Posterior cingulate gyrus (tissue), 11 donors: ENCODE measurements at regions of chr11 and their contacts with region 1.

Region 1: DNA sequence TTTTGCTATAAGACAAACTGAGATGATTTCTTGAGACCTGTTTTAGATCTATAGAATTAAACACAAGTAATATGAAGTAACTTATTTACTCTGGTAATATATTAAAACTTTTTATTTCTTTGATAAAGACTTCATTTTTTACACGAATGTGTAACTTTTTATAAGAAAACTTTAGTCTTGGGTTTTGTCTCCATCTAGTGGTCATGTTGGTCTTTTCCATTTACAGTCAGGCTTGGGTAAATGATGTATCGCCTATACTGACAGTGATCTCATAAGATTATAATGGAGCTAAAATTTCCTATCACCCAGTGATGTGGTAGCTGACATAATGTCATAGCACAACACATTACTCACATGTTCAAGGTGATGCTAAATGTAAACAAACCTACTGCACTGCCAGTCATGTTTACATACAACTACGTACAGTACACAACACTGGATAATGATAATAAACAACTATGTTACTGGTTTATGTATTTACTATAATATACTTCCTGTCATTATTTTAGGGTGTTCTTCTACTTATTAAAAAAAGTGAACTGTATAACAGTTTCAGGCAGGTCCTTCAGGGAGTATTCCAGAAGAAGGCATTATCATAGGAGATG is 7.5 kb upstream of the C11orf97 start:
- DNase-seq: no peak

Region 2: DNA sequence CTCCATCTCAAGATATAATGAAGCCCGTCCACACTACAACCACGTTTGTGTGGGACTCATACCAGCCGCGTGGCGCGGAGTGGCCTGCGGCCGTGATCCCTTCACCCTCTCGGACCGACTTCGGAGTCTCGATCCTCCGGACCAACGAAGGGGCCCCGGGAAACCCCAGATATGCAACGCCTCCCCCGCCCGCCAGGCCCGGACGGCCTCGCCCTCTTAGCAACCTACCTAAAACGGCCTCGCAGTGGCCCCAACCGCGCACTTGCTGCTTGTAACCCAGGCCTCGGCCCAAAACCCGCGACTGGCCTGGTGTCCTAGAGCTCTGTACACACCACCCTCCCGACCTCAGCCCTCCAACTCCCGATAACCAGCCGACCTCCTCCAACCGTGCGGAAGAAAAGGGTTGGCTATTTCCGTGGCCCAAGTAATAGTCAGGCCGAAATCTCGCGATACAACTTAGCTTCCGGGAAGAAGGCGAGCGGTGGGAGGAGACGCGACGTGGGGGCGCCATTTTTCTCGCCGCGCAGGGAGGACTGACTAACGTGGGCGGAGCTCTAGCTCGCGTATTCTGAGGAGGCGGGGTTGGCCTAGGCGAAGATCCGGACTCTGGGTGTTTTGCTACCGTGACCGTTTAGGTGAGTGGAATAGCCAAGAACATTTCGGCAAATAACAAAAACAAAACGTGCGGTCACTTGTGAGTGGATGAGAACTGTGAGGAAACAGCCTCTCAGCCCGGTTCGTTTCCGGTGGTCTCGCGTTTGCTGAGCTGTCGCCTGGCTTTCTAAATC is 763.5 kb before region 1 on chr11 and contains the starts of genes C11orf54 and TAF1D:
- intact Hi-C with region 1: loop called (anchors 10 kb)
- DNase-seq: peak; percentile 94 to 99 (median 95)

Region 3: DNA sequence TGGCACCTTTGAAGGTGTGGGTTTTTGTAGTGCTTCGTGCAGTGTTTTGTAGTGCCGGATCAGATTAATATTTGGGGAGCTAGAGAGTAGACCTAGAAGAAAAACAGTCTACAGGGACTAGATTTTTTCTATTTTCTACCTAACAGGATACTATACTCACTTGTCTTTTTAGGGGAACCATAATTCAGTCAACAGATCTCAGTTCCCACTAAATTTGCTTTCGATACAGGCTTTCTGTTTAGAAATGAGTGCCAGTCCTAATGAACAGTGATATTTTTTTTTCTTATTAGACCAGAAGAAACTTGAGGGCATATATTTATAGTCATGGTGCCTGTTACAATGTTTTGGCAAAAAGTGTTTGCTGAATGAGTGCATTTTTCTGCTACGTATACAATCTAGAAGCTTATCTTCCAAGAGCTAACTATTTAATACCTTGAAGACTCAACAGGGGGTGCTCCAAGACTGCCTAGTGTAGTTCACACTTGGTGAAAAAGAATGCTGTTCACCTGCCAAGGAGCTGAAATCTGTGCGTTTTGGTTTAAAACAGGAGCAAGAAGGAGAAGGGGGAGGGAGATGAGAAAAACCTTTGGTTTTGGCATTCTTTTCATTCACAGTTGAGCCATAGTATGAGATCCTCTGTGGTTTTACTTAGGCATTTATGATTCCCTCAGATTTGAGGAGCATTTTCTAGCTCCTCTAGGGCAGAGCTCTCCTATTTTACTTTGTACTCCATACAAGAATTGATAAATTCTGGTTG is 609.5 kb before region 1 on chr11:
- intact Hi-C with region 1: loop called (anchors 2 kb)
- DNase-seq: peak in 1 of 10 donors; percentile 2